CD14-positive monocyte (primary cell): ENCODE measurements at regions of chr4 and their contacts with region 1.

Region 1: DNA sequence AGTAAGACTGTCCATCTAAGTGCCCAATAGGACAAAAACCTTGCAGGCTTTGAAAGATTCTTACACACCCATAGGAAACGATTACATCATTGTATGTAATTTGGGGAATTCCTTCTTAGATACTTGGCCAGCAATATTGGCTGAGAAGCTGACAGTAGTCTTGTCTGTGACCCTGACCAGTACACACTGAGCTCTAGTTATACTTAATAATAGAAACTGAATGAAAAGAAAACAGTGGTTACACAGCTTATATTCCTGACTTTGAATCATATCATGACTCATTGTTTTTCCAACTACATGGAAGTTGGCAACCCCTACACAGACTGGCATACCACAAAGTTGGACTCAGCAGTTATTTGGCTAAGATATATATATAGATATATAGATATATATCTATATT is 7.1 kb upstream of the TLR2 start:
- DNase-seq: peak; percentile 63 to 91 (median 70)
- H3K4me3 ChIP-seq: no peak overlapping the region
- H3K4me3 Mint-ChIP-seq: no peak overlapping the region
- H3K27ac ChIP-seq: peak overlapping the region; percentile 42 to 43
- H3K27ac Mint-ChIP-seq: peak overlapping the region in 3 of 7 donors; percentile 41 to 78 (median 54)
- H3K4me1 ChIP-seq: peaks cover 30 to 38% of the 10 kb centered on the region in 2 donors
- H3K4me1 Mint-ChIP-seq: peaks cover 35% of the 10 kb centered on the region
- H3K27me3 ChIP-seq: no peaks in the 10 kb centered on the region
- H3K27me3 Mint-ChIP-seq: no peaks in the 10 kb centered on the region
- CTCF ChIP-seq: no peak

Region 2: GRCh38 chr4:153661914-153662313 is 15.1 kb before region 1 on chr4:
- intact Hi-C with region 1: loop called in 1 of 2 experiments (anchors 2 kb)
- DNase-seq: no peak
- H3K4me3 ChIP-seq: no peak overlapping the region
- H3K4me3 Mint-ChIP-seq: no peak overlapping the region
- H3K27ac ChIP-seq: peak overlapping the region; percentile 82 to 94
- H3K27ac Mint-ChIP-seq: peak overlapping the region; percentile 93 to 99 (median 96)
- H3K4me1 ChIP-seq: peaks cover 56 to 66% of the 10 kb centered on the region in 2 donors
- H3K4me1 Mint-ChIP-seq: peaks cover 76% of the 10 kb centered on the region
- H3K27me3 ChIP-seq: no peaks in the 10 kb centered on the region
- H3K27me3 Mint-ChIP-seq: peaks cover 0 to 5% (median 0%) of the 10 kb centered on the region in 3 donors
- CTCF ChIP-seq: no peak